GM10248 (cell line): ENCODE measurements at regions of chr1 and their contacts with region 1.

Region 1: DNA sequence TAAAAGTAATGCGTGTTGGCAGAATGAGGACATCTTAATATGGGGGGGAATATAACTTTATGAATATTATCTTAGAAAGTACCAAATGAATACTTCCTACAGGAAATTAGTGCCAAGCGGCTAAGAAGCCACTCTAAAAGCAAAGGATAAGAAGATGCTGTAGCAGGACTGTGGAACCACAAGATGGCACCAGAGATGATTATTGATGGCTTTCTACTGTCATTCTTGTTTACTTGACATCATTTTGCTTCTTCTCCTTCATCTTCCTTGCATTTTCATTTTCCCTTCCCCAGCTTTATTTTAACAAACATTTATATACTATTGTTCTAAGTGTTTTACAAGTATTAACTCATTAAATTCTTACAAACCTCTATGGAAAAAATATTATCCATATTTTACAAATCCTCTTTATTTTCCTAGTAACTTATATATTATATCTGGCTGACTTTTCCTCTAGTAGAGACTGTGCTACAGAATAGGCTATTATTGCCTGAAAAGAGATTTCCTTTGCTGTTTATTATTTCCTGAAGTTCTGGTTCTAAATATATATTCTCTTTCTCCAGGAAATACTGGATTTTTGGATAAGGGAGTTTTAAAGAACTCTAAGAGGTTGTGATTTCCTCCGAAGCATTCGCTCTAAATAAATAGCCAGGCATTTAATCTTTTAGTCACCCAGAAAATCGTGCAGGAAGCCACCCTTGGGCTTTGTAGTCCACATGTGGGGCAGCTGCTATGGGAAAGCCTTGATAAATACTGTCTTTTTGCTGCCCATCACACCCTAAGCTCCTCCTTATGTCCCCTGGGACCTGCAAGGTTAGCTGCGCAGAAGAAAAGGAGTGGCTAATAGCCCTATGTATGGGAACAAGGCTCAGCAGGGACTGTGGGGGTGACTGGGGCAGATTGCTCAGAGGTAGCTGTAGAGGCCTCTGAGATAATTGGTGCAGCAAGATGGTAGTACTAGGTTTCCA is 69.8 kb downstream of the TPR start:
- DNase-seq: peak; percentile 41
- CTCF ChIP-seq: peak; percentile 67

Region 2: GRCh38 chr1:186325239-186325638 is 20.0 kb after region 1 on chr1:
- CTCF ChIA-PET with region 1: interaction called, 14 read pairs
- POLR2A ChIA-PET with region 1: no interaction called
- DNase-seq: no peak
- CTCF ChIP-seq: no peak

Region 3: GRCh38 chr1:186442651-186443114 is 137.4 kb after region 1 on chr1:
- CTCF ChIA-PET with region 1: no interaction called
- POLR2A ChIA-PET with region 1: no interaction called
- DNase-seq: no peak
- CTCF ChIP-seq: no peak